Activated naive CD4-positive, alpha-beta T cell treated with anti-CD3 and anti-CD28 coated beads for 36 hours (primary cell): ENCODE measurements at regions of chr16 and their contacts with region 1.

Region 1: DNA sequence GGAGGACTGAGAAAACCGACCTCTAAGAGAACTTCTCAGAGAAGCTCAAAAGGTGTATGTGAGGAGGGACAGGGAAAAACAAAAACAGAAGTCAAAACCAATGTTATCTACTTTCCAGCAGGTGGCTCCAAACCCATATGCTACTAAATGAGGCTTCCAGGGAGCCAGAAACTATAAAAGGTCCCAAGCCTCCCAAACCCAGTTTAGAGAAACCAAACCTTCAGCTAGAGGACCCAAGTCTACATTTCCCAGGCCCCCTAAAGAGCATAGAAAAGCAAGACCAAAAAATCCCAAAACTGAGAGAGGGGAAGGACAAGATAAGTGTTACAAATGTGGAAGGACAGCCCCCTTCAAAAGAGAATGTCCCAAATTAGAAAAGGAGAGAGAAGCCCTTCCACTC is 3.7 kb downstream of the HPR start:
- DNase-seq: no peak
- H3K4me3 Mint-ChIP-seq: no peak overlapping the region
- H3K27ac Mint-ChIP-seq: no peak overlapping the region
- H3K4me1 Mint-ChIP-seq: no peaks in the 10 kb centered on the region
- H3K27me3 Mint-ChIP-seq: no peaks in the 10 kb centered on the region

Region 2: GRCh38 chr16:72099377-72099818 is 32.7 kb after region 1 on chr16:
- CTCF ChIA-PET with region 1: interaction called, 20 read pairs
- intact Hi-C with region 1: loop called (anchors 1 kb)
- DNase-seq: peak; percentile 56
- H3K4me3 Mint-ChIP-seq: no peak overlapping the region
- H3K27ac Mint-ChIP-seq: no peak overlapping the region
- H3K4me1 Mint-ChIP-seq: peaks cover 14% of the 10 kb centered on the region
- H3K27me3 Mint-ChIP-seq: no peaks in the 10 kb centered on the region